Natural killer cell (primary cell): ENCODE measurements at regions of chr2 and their contacts with region 1.

Region 1: DNA sequence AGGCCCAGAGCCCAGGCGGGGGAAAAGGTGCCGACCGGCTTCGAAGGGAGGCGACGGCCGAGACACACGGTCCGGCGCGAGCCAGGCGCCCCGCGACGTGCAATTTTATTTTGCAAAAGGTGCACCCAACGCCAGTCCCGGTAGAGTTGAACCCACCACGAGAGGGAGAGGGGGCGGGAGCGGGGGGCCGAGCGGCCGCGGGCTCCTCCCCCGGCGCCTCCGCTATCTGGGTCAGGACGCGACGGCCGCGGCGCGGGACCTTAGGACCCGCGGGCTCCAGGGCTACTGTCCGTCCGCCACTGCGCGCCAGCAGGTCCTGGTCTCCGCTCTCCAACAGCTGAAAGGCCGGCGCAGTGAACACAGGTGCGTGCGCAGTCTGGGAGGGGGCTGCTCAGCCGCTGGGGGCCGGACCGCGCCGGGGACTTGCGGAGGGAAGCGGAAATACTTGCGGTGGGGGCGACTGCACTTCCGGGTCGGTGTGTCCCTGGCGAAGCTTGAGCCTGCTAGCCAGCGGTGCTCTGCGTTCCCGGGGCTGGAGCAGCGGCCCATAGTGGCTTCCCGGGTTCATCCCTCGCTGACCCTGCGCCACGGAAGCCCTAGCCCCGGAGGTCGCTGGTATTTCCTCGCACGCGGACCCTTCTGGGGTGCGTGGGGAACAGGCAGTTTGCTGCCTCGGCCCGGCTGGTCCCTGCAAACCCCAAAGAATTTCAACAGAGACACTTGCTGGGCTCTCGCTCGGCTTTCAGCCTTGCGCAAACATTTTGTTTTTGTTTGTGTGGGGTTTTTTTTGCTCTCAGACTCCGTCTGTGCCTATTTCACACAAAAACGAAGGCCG is at the start of gene RMDN2:
- DNase-seq: peak; percentile 82 to 87
- ATAC-seq: peak; percentile 86 to 91 (median 87)
- H3K4me3 ChIP-seq: peak within 1 kb of the TSS; percentile 63
- H3K4me3 Mint-ChIP-seq: peak within 1 kb of the TSS; percentile 93
- H3K27ac ChIP-seq: peak within 1 kb of the TSS; percentile 77
- H3K27ac Mint-ChIP-seq: peak within 1 kb of the TSS; percentile 80 to 90
- H3K4me1 ChIP-seq: peaks cover 11% of the 10 kb centered on the region
- H3K4me1 Mint-ChIP-seq: peaks cover 11 to 24% of the 10 kb centered on the region in 2 donors
- H3K27me3 ChIP-seq: peaks cover 1% of the 10 kb centered on the region
- H3K27me3 Mint-ChIP-seq: peaks cover 0 to 7% of the 10 kb centered on the region in 2 donors
- CTCF ChIP-seq: no peak
- total RNA-seq, gene RMDN2: 8.4 to 10.9 (median 8.4) TPM

Region 2: DNA sequence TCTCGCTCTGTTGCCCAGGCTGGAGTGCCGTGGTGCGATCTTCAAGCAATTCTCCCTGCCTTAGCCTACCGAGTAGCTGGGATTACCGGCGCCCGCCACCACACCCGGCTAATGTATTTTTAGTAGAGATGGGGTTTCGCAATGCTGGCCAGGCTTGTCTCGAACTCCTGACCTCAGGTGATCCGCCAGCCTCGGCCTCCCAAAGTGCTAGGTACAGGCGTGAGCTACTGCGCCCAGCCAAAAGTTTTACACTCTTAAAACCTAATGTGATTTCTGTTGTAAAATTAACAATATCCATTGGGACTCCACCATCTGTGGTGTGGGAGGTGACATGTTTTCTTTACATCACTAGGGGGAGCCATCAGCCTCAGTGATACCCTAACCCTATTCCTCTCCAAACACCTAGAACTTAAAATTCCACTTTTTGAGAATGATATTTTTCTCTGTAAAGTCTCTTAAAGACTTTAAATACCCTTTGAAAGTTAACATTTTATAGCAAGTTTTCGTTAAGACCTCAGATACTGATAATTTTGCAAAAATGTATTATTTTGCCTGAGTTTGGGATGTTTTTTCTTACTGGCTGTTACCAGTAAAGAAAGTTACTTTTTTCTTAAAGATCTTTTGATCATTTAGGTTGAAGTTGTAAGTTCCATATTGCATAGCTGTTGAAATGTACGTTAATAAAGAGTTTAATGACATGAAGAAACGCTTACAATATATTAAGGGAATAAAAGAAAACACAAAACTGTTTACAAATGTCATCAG is 756.9 kb before region 1 on chr2:
- intact Hi-C with region 1: no loop called
- DNase-seq: peak in 1 of 2 donors; percentile 68
- ATAC-seq: peak; percentile 56 to 85 (median 84)
- H3K4me3 ChIP-seq: no peak overlapping the region
- H3K4me3 Mint-ChIP-seq: no peak overlapping the region
- H3K27ac ChIP-seq: no peak overlapping the region
- H3K27ac Mint-ChIP-seq: no peak overlapping the region
- H3K4me1 ChIP-seq: no peaks in the 10 kb centered on the region
- H3K4me1 Mint-ChIP-seq: no peaks in the 10 kb centered on the region
- H3K27me3 ChIP-seq: no peaks in the 10 kb centered on the region
- H3K27me3 Mint-ChIP-seq: no peaks in the 10 kb centered on the region
- CTCF ChIP-seq: peak; percentile 79

Region 3: DNA sequence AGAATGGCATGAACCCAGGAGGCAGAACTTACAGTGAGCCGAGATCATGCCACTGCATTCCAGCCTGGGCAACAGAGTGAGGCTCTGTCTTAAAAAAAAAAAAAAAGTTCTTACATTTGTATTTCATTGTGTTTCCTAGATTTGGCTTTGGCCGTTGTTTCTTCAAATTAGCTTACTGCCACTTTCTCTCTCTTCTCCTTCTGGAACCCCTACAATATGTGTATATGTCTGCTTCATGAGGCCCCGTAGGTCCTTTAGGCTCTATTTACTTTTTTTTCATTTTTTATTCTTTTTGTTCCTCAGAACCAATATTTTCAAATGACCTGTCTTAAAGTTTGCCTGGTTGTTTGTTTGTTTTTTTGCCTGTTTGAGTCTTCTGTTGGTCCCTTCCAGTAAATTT is 41.0 kb after region 1 on chr2:
- intact Hi-C with region 1: loop called (anchors 5 kb)
- DNase-seq: no peak
- ATAC-seq: no peak
- H3K4me3 ChIP-seq: no peak overlapping the region
- H3K4me3 Mint-ChIP-seq: no peak overlapping the region
- H3K27ac ChIP-seq: no peak overlapping the region
- H3K27ac Mint-ChIP-seq: no peak overlapping the region
- H3K4me1 ChIP-seq: no peaks in the 10 kb centered on the region
- H3K4me1 Mint-ChIP-seq: no peaks in the 10 kb centered on the region
- H3K27me3 ChIP-seq: no peaks in the 10 kb centered on the region
- H3K27me3 Mint-ChIP-seq: no peaks in the 10 kb centered on the region
- CTCF ChIP-seq: no peak